CD8-positive, alpha-beta memory T cell (primary cell): ENCODE measurements at regions of chr10 and their contacts with region 1.

Region 1: GRCh38 chr10:71708301-71708703 is 11.3 kb downstream of the C10orf105 start:
- DNase-seq: peak; percentile 42 to 76 (median 49)
- H3K4me3 ChIP-seq: peak overlapping the region; percentile 26
- H3K4me3 Mint-ChIP-seq: peak overlapping the region in 3 of 7 donors; percentile 20 to 78 (median 32)
- H3K27ac ChIP-seq: no peak overlapping the region
- H3K27ac Mint-ChIP-seq: peak overlapping the region in 4 of 8 donors; percentile 17 to 72 (median 56)
- H3K4me1 ChIP-seq: peaks cover 30% of the 10 kb centered on the region
- H3K4me1 Mint-ChIP-seq: peaks cover 39 to 54% (median 39%) of the 10 kb centered on the region in 3 donors
- H3K27me3 ChIP-seq: no peaks in the 10 kb centered on the region
- H3K27me3 Mint-ChIP-seq: no peaks in the 10 kb centered on the region

Region 2: DNA sequence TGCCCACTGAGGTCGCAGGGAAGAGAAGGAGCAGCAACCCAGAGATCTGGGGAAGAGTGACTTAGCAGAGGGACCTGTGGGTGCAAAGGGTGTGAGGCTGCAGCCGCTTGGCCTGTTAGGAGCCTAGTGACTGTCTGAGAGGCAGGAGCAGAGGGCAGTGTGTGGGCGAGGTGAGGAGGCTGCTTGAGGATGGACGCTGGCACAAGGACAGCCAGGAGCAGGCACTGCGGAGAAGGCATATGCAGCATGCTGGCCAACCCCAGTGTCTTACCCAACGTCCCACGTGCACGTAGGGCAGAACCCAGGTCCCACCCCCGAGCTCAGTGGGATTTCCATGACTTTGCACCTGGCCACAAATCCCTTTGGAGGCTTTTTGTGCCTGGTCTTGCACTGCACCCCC is 42.8 kb before region 1 on chr10:
- CTCF ChIA-PET with region 1: interaction called, 21 read pairs
- POLR2A ChIA-PET with region 1: no interaction called
- DNase-seq: no peak
- H3K4me3 ChIP-seq: no peak overlapping the region
- H3K4me3 Mint-ChIP-seq: no peak overlapping the region
- H3K27ac ChIP-seq: no peak overlapping the region
- H3K27ac Mint-ChIP-seq: no peak overlapping the region
- H3K4me1 ChIP-seq: peaks cover 11% of the 10 kb centered on the region
- H3K4me1 Mint-ChIP-seq: peaks cover 5 to 12% (median 8%) of the 10 kb centered on the region in 3 donors
- H3K27me3 ChIP-seq: no peaks in the 10 kb centered on the region
- H3K27me3 Mint-ChIP-seq: peaks cover 0 to 8% of the 10 kb centered on the region in 2 donors

Region 3: GRCh38 chr10:71719042-71719441 is 10.7 kb after region 1 on chr10:
- CTCF ChIA-PET with region 1: interaction called, 32 read pairs
- POLR2A ChIA-PET with region 1: interaction called, 4 read pairs
- DNase-seq: no peak
- H3K4me3 ChIP-seq: no peak overlapping the region
- H3K4me3 Mint-ChIP-seq: no peak overlapping the region
- H3K27ac ChIP-seq: no peak overlapping the region
- H3K27ac Mint-ChIP-seq: no peak overlapping the region
- H3K4me1 ChIP-seq: peaks cover 55% of the 10 kb centered on the region
- H3K4me1 Mint-ChIP-seq: peaks cover 37 to 70% (median 45%) of the 10 kb centered on the region in 3 donors
- H3K27me3 ChIP-seq: no peaks in the 10 kb centered on the region
- H3K27me3 Mint-ChIP-seq: no peaks in the 10 kb centered on the region

Region 4: GRCh38 chr10:71766702-71767419 is 58.6 kb after region 1 on chr10:
- CTCF ChIA-PET with region 1: interaction called, 50 read pairs
- POLR2A ChIA-PET with region 1: interaction called, 3 read pairs
- DNase-seq: peak in 2 of 5 donors; percentile 48 to 70
- H3K4me3 ChIP-seq: peak overlapping the region; percentile 18
- H3K4me3 Mint-ChIP-seq: peak overlapping the region; percentile 67 to 91 (median 78)
- H3K27ac ChIP-seq: peak overlapping the region; percentile 45
- H3K27ac Mint-ChIP-seq: peak overlapping the region; percentile 92 to 100 (median 97)
- H3K4me1 ChIP-seq: peaks cover 97% of the 10 kb centered on the region
- H3K4me1 Mint-ChIP-seq: peaks cover 91 to 100% (median 98%) of the 10 kb centered on the region in 3 donors
- H3K27me3 ChIP-seq: no peaks in the 10 kb centered on the region
- H3K27me3 Mint-ChIP-seq: no peaks in the 10 kb centered on the region